ENCODE measurements at regions of chr13 and their contacts with region 1.

Region 1: DNA sequence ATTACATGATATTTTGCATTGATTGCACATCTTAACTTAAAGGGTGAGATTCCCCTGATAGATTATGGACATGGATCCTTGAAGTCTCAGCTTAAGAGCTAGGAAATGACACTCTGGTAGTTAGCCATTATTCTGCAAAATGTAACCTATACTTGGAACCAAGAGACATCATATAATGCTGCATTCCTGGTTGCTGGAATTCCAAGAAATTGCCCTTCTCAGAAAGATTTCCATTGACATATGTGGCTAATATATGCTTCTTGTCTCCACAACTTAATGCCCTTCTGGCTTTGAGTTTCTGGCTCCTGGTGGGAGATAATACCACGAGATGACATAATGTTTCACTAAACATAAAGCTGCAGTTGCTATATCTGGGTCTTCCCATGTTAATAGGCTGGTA is 204.4 kb upstream of the TRPC4 start:
- DNase-seq: no peak
- H3K4me3 ChIP-seq: no peak overlapping the region
- H3K27ac ChIP-seq: no peak overlapping the region
- H3K4me1 ChIP-seq: no peaks in the 10 kb centered on the region
- H3K27me3 ChIP-seq: no peaks in the 10 kb centered on the region
- CTCF ChIP-seq: no peak

Region 2: DNA sequence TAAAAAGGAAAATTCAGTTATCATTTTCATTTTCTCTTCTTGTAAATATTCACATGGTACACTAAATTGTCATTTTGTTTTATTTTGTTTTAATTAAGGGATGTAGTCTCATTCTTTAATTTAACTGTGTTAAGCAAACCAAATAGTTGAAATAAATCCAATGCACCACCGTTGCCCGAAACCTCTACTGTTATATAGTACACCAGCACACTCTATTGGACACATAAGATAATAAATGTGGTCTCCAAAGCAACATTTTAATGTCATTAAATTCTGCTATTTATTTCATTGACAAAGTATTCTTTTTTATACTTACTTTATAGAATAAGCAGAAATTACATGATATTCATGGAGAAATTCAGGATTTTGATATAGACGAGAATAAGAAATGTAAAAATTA is 456.6 kb after region 1 on chr13:
- CTCF ChIA-PET with region 1: no interaction called
- dilution Hi-C with region 1: no loop called
- in situ Hi-C with region 1: no loop called
- intact Hi-C with region 1: loop called (anchors 10 kb)
- DNase-seq: peak; percentile 5
- H3K4me3 ChIP-seq: no peak overlapping the region
- H3K27ac ChIP-seq: no peak overlapping the region
- H3K4me1 ChIP-seq: no peaks in the 10 kb centered on the region
- H3K27me3 ChIP-seq: peaks cover 3% of the 10 kb centered on the region
- CTCF ChIP-seq: peak; percentile 47 to 54